ENCODE measurements at regions of chr1 and their contacts with region 1.

Region 1: GRCh38 chr1:33472349-33472980 is at the start of gene ZSCAN20:
- DNase-seq: peak; percentile 99
- ATAC-seq: peak; percentile 90
- total RNA-seq, gene ZSCAN20: 4.4 TPM

Region 2: GRCh38 chr1:33573661-33574060 is 101.2 kb after region 1 on chr1:
- intact Hi-C with region 1: loop called (anchors 5 kb)
- DNase-seq: no peak
- ATAC-seq: no peak

Region 3: GRCh38 chr1:33616773-33617172 is 144.3 kb after region 1 on chr1:
- intact Hi-C with region 1: loop called (anchors 10 kb)
- DNase-seq: no peak
- ATAC-seq: no peak

Region 4: DNA sequence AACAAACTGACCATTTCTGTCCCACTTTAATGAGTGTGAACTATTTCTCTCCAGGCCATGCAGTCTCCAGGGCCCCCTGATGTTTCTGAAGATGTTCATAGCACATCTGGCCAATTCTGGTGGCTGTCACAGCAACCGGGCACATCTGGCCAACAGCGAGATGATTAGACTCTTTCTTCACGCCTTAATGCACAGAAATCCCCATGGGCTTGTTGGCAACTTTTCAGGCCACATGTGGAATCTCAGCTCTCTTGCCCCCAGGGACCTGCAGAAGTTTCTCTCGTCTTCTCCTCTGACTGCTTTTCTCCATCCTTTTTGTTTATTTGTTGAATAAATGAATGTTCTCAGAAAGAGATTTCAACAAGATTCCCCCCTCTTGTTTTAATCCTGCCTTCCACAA is 320.2 kb after region 1 on chr1:
- intact Hi-C with region 1: no loop called
- DNase-seq: no peak
- ATAC-seq: no peak

Measured in left ventricle myocardium superior (tissue), 1 donor.